Activated CD4-positive, alpha-beta memory T cell treated with anti-CD3 and anti-CD28 coated beads for 36 hours (primary cell): ENCODE measurements at regions of chr3 and their contacts with region 1.

Region 1: GRCh38 chr3:64484289-64484992 is 203.4 kb downstream of the ADAMTS9 start:
- DNase-seq: peak; percentile 81
- H3K4me3 Mint-ChIP-seq: no peak overlapping the region
- H3K27ac Mint-ChIP-seq: no peak overlapping the region
- H3K4me1 Mint-ChIP-seq: peaks cover 2% of the 10 kb centered on the region
- H3K27me3 Mint-ChIP-seq: peaks cover 18% of the 10 kb centered on the region

Region 2: DNA sequence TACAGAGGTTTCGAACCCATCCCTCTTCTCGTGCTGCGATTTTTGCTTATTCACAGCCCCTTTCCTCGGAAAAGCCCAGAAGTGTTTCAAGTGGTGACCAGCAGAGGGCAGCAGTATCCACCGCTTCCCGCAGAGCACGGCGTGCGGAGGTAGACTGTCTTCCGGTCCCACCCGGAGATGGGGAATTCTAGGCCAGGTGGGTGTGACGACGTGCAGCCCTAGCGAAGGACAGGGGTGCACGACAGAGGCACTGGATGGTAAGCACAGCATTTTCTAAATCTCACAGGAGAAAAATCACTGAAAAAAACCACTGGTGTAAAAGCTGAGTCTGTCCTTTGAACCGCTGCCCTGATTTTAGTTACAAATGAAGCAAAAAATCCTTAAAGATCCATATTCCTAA is 453.7 kb before region 1 on chr3:
- CTCF ChIA-PET with region 1: interaction called, 23 read pairs
- POLR2A ChIA-PET with region 1: no interaction called
- intact Hi-C with region 1: loop called (anchors 1 kb)
- DNase-seq: peak; percentile 83
- H3K4me3 Mint-ChIP-seq: peak overlapping the region; percentile 52
- H3K27ac Mint-ChIP-seq: no peak overlapping the region
- H3K4me1 Mint-ChIP-seq: peaks cover 6% of the 10 kb centered on the region
- H3K27me3 Mint-ChIP-seq: peaks cover 10% of the 10 kb centered on the region

Region 3: DNA sequence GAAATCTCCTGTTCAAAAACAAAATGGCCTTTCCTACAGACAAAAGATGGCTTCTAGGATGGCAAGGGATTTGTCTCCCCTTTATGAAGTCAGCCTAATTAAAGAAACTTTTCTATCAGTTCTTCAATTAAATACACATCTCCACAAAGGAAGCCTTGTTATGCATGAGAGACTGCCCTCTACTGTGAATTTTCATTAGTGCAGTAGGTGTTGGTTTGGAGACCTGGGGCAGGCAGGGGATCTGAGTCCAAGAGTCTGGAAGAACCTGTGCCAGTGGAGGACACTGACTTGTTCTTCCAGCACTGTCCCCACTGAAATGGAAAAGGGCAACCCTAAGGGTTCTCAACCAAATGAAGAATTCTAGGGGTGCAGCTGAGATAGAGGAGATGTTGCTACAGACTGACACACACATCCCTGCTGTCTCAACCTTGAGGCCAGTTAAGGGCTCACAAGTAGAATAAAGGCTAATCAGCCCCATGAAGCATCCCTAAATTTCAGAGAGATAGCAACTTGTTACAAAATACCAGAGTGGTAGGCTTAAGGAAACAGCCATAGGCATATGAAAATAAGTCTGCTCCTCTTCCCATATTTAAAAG is 85.1 kb before region 1 on chr3:
- CTCF ChIA-PET with region 1: no interaction called
- POLR2A ChIA-PET with region 1: no interaction called
- intact Hi-C with region 1: loop called (anchors 10 kb)
- DNase-seq: no peak
- H3K4me3 Mint-ChIP-seq: no peak overlapping the region
- H3K27ac Mint-ChIP-seq: no peak overlapping the region
- H3K4me1 Mint-ChIP-seq: no peaks in the 10 kb centered on the region
- H3K27me3 Mint-ChIP-seq: no peaks in the 10 kb centered on the region

Region 4: GRCh38 chr3:64462203-64462602 is 22.2 kb before region 1 on chr3:
- CTCF ChIA-PET with region 1: interaction called, 14 read pairs
- POLR2A ChIA-PET with region 1: no interaction called
- intact Hi-C with region 1: no loop called
- DNase-seq: no peak
- H3K4me3 Mint-ChIP-seq: no peak overlapping the region
- H3K27ac Mint-ChIP-seq: no peak overlapping the region
- H3K4me1 Mint-ChIP-seq: no peaks in the 10 kb centered on the region
- H3K27me3 Mint-ChIP-seq: peaks cover 11% of the 10 kb centered on the region